ENCODE measurements at regions of chr19 and their contacts with region 1.

Region 1: GRCh38 chr19:15149737-15150136 is 42.5 kb downstream of the SYDE1 start:
- DNase-seq: no peak
- H3K4me3 ChIP-seq: no peak overlapping the region
- H3K27ac ChIP-seq: no peak overlapping the region
- H3K4me1 ChIP-seq: no peaks in the 10 kb centered on the region
- H3K27me3 ChIP-seq: peaks cover 0 to 9% (median 0%) of the 10 kb centered on the region in 4 donors
- CTCF ChIP-seq: no peak
- EP300 ChIP-seq: no peak
- POLR2A ChIP-seq: no peak

Region 2: DNA sequence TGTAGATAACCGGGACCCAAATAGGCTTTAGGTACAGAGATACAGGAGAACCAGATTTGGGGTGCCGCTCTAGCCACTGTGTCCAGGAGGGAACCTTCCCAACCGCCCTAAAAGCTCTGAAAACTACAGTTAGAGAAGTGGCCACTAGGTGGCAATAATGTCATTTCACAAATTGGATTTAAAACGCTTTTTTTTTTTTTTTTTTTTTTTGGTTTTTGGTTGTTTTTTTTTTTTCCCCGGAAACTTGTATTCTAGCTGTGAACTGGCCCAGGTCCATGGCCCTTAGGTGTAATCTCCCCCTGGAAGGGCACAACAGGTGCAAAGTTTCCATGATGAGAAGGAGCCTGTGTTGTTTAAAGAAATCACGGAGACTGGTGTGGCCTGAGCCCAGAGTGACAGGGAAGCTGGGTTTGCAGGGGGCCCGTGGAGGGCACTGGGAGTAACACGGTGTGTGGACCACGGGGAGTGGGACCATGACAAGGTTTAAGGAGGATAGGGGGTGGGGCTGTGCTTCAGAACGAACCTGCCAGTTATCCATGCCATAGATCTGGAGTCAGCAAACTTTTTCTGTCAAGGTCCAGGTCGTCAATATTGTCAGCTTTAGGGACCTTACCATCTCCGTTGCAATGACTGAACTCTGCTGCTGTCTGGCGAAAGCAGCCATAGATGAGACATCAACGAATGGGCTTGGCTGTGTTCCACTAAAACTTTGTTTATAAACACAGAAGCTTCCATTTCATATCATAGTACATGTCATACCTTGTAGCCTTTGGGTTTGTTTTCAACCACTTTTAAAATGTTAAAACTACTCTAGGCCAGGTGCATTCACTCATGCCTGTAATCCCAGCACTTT is 57.6 kb before region 1 on chr19:
- intact Hi-C with region 1: loop called (anchors 1 kb)
- DNase-seq: no peak
- H3K4me3 ChIP-seq: peak overlapping the region; percentile 1 to 16 (median 14)
- H3K27ac ChIP-seq: no peak overlapping the region
- H3K4me1 ChIP-seq: peaks cover 5 to 10% (median 8%) of the 10 kb centered on the region in 4 donors
- H3K27me3 ChIP-seq: peaks cover 0 to 13% (median 0%) of the 10 kb centered on the region in 4 donors
- CTCF ChIP-seq: peak; percentile 65 to 75 (median 74)
- EP300 ChIP-seq: no peak
- POLR2A ChIP-seq: no peak

Region 3: DNA sequence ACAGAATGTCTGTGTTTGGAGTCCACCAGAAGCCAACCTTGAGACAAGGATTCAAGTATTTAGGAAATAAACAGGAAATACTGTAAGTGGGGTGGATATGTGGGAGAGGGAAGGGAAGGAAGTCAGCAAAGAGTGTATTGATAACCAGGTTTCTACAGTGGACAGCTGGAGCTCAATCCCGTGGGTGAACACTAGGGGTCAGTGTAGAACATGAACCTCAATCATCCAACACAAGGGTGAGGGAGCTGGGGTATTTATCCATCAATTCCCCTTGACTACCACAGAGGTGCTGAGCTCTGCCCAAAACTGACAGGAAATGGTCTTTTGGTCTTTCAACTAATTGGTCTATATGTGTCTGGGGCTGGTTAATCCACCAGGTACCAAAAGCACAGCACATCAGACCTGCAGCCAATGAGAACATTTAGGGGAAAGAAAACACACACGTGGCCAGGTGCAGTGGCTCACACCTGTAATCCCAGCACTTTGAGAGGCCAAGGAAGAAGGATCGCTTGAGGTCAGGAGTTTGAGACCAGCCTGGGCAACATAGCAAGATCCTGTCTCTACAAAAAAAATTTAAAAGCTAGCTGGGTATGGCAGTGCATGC is 48.2 kb before region 1 on chr19:
- intact Hi-C with region 1: loop called (anchors 2 kb)
- DNase-seq: no peak
- H3K4me3 ChIP-seq: no peak overlapping the region
- H3K27ac ChIP-seq: no peak overlapping the region
- H3K4me1 ChIP-seq: peaks cover 2 to 3% (median 2%) of the 10 kb centered on the region in 4 donors
- H3K27me3 ChIP-seq: no peaks in the 10 kb centered on the region
- CTCF ChIP-seq: peak; percentile 57 to 72 (median 59)
- EP300 ChIP-seq: no peak
- POLR2A ChIP-seq: no peak

Measured in esophagus muscularis mucosa (tissue), 4 donors.